GM10248 (cell line): ENCODE measurements at regions of chr1 and their contacts with region 1.

Region 1: DNA sequence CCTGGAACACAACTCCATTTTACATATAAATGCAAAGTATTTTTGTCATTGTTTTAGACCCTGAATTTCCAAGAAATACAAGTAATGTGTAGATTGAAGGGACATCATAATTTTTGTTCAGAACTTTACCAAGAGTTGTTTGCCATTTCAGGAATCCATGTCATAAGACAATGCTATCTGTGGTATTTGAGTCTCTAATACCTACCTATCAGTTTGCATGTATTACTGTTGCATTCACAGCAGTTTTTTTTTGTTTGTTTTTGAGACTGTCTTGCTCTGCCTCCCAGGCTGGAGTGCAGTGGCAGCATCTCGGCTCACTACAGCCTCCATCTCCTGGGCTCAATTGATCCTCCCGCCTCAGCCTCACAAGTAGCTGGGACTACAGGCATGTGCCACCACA is 17.1 kb downstream of the MPZ start:
- DNase-seq: no peak
- CTCF ChIP-seq: no peak

Region 2: DNA sequence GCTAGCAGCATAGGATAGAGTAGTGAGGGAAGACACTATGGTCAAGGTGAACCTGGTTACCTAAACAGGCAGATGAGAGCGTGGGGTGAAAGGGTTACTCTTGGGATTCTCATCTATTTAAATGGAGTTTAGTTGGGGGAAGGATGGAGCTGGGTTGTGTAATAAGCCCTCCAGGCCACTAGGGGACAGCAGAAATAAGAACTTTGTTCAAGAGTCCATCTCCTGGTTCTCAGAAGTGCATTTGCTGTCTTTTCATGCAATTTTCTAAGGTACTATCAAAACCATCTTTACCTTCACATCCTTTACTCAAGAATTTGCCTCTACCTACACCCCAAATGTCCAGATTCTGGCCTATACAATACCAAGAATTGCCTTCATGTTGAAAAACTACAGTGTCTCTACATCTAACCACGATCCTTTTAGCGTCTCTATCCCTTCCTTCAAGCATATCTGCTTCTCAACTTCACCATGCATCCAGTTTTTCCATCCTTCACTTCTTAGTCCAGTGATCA is 673.8 kb before region 1 on chr1:
- CTCF ChIA-PET with region 1: no interaction called
- POLR2A ChIA-PET with region 1: no interaction called
- DNase-seq: no peak
- CTCF ChIP-seq: peak; percentile 64

Region 3: DNA sequence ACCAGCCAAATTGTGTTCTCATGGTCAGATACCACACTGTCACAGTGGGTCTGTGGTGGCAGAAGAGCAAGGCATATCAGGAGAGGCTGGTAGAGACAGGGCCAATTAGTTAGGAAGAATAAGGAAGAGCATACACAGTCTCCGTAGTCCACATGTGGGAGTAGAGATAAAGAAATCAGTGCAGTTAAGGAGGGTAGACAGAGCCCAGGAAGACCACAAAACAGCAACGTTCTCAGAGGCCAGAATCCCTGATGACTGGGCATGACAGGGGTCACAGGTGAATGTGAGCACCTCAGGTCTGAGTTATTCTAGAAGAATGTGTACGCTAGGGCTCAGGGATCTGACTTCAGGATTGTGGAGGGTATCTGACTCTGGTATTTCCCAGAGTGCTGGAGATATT is 612.7 kb before region 1 on chr1:
- CTCF ChIA-PET with region 1: no interaction called
- POLR2A ChIA-PET with region 1: no interaction called
- DNase-seq: no peak
- CTCF ChIP-seq: no peak

Region 4: DNA sequence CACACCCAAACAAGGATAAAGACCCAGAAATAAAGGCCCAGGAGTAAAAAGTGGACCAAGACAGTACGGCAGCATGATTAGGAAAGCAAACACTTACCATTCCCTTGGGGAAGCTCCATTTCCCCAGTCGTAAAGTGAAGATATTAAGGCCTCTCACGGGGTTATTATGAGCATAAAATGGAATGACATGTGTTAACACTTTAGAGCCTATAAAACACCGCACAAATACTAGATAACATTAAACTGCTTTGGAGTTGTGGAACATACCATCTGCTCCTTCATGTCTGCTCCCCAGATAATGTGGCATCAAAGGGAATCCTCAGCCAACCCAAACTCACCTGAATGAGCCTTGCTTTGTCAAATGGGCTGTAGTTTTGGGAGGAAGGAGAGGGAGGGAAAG is 329.1 kb before region 1 on chr1:
- CTCF ChIA-PET with region 1: no interaction called
- POLR2A ChIA-PET with region 1: no interaction called
- DNase-seq: no peak
- CTCF ChIP-seq: no peak

Region 5: DNA sequence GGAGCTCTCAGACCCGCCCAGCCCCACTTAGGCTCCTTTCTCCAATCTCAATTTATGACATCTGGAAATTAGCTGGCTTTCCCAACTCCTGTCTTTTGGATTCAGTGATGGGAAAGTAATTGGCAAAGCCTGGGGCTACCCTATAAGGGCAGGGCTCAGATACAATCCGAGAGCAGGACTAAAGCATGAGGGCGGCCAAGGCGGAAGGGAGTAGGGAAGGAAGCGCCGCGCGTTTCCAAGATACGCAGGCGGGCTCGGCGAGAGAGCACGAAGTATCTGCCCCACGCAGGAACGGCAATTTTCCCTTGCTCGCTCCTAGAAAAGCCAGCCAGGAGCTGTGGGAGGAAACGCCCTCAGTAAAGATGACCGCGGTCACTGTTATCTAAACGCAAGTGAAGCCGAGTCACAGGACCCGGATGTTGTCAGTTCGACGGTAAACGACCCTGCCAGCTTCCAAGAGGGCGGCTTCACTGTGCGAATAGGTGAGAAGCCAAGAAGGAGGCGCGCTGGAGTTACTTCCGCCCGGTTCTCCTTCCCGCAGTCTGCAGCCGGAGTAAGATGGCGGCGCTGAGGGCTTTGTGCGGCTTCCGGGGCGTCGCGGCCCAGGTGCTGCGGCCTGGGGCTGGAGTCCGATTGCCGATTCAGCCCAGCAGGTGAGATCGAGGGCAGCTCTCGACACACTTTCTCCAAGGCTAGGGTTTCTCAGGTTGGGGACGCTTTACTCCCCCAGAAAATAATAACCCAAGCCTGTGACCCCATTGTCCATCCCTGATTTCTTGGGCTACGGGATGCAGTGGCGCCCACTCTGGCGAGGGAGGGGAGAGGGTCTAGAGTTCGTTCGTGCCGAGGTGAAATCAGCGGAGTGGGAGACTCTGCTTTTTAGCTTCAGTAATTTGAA is 90.6 kb before region 1 on chr1 and contains the start of gene NDUFS2:
- CTCF ChIA-PET with region 1: interaction called, 11 read pairs
- POLR2A ChIA-PET with region 1: no interaction called
- DNase-seq: peak; percentile 94
- CTCF ChIP-seq: peak; percentile 10

Region 6: DNA sequence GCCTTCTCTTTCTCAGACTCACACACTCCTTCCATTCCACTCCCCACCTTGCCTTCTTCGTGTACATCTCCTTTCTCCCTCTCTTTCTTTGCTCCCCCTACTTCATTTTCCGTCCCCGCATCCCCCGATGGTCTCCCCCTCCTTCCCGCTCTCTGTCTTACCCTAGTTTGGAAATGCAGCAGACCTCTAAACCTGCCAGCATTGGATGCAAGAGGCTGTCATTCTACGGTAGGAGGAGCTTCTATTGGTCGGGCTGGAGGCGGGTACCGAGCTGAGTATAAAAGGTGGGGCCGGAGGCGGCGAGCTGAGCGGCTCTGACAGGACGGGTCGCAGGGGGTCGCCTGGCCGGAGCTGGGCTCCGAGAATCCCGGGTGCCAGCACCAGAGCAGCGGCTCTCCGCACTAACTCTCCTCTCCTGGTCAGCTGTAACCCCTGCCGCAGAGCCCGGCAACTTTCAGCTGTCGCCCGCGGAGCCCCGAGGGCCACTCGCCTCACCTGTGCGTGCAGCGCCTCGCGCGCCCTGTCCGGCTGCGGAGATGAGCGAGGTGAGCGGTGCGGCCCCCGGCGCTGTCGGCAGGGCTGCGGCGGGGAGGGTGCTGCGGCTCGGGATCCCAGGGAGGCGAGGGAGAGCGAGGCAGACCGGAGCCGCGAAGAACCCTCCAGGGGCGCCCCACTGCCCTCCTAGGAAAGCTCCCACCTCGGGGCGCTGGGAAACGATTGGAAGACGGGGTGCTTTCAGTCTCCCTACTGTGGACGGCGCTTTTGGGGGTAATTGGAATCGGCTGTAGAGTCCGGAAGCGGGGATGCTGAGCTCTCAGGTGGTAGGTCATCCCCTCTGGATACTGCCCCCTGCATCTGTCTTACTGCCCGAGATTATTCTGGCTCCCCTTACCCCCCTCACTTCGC is 33.9 kb before region 1 on chr1 and contains the start of gene PCP4L1:
- CTCF ChIA-PET with region 1: interaction called, 11 read pairs
- POLR2A ChIA-PET with region 1: no interaction called
- DNase-seq: peak; percentile 70
- CTCF ChIP-seq: no peak

Region 7: GRCh38 chr1:161274874-161275273 is 17.8 kb before region 1 on chr1:
- CTCF ChIA-PET with region 1: interaction called, 18 read pairs
- POLR2A ChIA-PET with region 1: no interaction called
- DNase-seq: no peak
- CTCF ChIP-seq: no peak

Region 8: DNA sequence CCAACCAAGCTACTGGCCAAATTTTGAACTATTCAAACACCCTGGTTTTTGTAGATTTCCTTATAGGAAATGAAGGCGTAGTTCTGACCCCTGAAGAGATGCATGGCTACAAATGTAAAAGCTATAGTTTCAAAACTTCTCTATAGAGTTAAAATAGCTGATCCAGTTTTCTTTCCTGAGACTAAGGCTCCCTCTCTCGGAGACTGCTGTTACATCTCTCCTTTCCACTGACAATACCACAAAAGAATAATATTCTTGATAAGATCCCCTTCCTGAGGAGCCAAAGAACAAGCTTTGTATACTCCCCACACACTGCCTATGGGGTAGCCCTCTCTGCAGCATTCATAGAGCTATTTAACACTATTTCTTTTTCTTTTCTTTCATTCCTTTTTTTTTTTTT is 81.7 kb after region 1 on chr1:
- CTCF ChIA-PET with region 1: interaction called, 11 read pairs
- POLR2A ChIA-PET with region 1: no interaction called
- DNase-seq: no peak
- CTCF ChIP-seq: peak; percentile 8

Region 9: DNA sequence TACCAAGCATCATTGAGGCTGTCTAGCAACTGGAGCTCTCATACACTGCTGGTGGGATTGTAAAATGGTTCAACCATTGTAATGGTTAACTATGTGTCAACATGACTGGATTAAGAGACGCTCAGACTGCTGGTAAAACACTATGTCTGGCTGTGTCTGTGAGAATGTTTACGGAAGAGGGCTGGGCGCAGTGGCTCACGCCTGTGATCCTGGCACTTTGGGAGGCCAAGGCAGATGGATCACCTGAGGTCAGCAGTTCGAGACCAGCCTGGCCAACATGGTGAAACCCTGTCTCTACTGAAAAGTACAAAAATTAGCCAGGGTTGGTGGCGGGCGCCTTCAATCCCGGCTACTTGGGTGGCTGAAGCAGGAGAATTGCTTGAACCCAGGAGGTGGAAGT is 409.6 kb after region 1 on chr1:
- CTCF ChIA-PET with region 1: no interaction called
- POLR2A ChIA-PET with region 1: no interaction called
- DNase-seq: no peak
- CTCF ChIP-seq: no peak